ENCODE measurements at regions of chr3 and their contacts with region 1.

Region 1: DNA sequence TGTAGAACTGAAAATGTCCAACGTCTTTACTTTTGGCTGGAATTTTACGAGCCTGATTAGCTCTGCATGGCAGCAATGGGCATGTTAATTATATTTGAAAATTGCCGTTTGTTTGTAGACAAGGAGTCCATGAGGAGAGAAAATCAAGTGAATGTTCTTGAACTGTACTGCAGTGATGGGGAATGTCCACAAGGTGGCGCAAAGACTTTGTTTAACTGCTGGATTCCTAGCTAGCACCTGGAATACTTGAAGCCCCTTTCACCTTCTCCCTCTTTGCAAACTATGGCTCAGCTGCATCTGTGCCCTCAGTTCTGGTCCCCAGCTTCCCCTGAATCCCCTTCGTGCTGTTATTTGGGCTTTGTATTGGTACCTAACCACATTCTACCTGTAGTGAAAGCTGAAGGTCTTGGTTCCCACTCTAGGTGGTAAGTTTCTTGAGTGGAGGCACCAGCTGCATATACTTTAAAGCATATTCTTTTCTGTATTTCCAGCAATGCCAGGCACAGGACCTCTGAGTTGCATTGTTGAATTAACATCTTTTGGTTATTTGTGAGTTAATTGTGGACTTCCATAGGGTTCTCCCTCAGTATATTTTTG is 25.3 kb downstream of the EXOG start:
- DNase-seq: peak; percentile 72
- H3K4me3 Mint-ChIP-seq: no peak overlapping the region
- H3K27ac Mint-ChIP-seq: no peak overlapping the region
- H3K4me1 Mint-ChIP-seq: peaks cover 30% of the 10 kb centered on the region
- H3K27me3 Mint-ChIP-seq: no peaks in the 10 kb centered on the region

Region 2: GRCh38 chr3:38397320-38397719 is 124.2 kb before region 1 on chr3:
- CTCF ChIA-PET with region 1: no interaction called
- POLR2A ChIA-PET with region 1: no interaction called
- intact Hi-C with region 1: no loop called
- DNase-seq: peak; percentile 18
- H3K4me3 Mint-ChIP-seq: no peak overlapping the region
- H3K27ac Mint-ChIP-seq: no peak overlapping the region
- H3K4me1 Mint-ChIP-seq: no peaks in the 10 kb centered on the region
- H3K27me3 Mint-ChIP-seq: no peaks in the 10 kb centered on the region

Region 3: DNA sequence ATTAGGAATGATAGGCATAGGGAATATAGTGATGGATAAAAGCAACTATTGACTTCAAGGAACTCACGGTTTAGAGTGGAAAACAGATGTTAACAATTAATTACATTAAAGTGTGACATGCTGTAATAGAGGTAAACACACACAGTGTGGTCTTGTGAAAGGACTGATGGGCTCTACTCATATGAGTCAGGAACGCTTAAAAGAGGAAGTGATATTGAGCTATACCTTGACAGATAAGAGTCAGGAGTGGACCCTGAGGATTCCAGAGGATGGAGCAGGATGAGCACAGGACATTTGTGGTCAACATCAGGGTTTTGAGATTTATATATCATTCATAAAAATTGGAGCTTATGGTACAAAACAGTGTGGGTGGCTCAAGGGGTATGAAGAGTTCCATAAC is 14.4 kb before region 1 on chr3:
- CTCF ChIA-PET with region 1: interaction called, 16 read pairs
- POLR2A ChIA-PET with region 1: interaction called, 3 read pairs
- intact Hi-C with region 1: no loop called
- DNase-seq: no peak
- H3K4me3 Mint-ChIP-seq: no peak overlapping the region
- H3K27ac Mint-ChIP-seq: no peak overlapping the region
- H3K4me1 Mint-ChIP-seq: no peaks in the 10 kb centered on the region
- H3K27me3 Mint-ChIP-seq: no peaks in the 10 kb centered on the region

Region 4: GRCh38 chr3:38538773-38539353 is 17.4 kb after region 1 on chr3:
- CTCF ChIA-PET with region 1: interaction called, 12 read pairs
- POLR2A ChIA-PET with region 1: no interaction called
- intact Hi-C with region 1: no loop called
- DNase-seq: no peak
- H3K4me3 Mint-ChIP-seq: no peak overlapping the region
- H3K27ac Mint-ChIP-seq: no peak overlapping the region
- H3K4me1 Mint-ChIP-seq: peaks cover 3% of the 10 kb centered on the region
- H3K27me3 Mint-ChIP-seq: no peaks in the 10 kb centered on the region

Region 5: DNA sequence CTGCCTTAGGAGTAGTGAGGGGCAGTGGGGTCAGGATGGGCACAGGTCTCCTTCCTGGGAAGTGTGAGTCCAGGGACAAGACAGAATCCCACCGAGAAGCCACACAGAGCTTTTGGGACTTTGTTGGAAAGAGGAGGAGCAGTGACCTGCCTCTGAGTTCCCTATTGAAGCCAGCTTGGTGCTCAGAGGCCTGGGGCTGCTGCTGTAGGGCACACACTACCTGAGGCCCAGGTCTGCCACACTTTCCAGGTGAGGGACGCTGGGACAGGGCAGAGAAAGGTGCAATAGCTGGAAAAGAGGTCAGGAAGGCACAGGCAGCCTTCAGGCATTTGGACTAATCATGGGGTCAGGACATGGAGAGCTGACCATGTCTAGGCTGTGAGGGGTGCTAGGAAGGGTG is 60.3 kb after region 1 on chr3:
- CTCF ChIA-PET with region 1: no interaction called
- POLR2A ChIA-PET with region 1: no interaction called
- intact Hi-C with region 1: no loop called
- DNase-seq: no peak
- H3K4me3 Mint-ChIP-seq: no peak overlapping the region
- H3K27ac Mint-ChIP-seq: no peak overlapping the region
- H3K4me1 Mint-ChIP-seq: no peaks in the 10 kb centered on the region
- H3K27me3 Mint-ChIP-seq: no peaks in the 10 kb centered on the region

Region 6: DNA sequence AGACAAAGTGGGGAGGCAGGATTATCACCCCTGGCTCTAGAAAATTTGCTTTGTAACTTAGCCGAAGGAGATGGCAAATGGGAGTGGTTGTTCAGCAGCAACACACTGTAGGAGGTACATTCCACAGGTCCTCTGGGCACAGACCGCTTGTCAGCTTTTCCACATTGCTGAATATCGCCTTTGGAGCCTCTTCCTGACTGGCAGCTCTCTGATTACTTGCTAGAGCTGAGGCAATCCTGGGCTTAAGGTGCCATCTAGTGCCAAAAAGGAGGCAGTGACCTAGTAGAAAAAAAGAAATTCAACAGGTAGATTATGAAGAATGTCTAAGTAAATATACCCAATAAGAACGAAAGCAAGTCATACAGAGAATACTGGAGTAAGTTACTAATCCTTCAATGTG is 141.1 kb after region 1 on chr3:
- CTCF ChIA-PET with region 1: interaction called, 77 read pairs
- POLR2A ChIA-PET with region 1: no interaction called
- intact Hi-C with region 1: no loop called
- DNase-seq: no peak
- H3K4me3 Mint-ChIP-seq: no peak overlapping the region
- H3K27ac Mint-ChIP-seq: no peak overlapping the region
- H3K4me1 Mint-ChIP-seq: no peaks in the 10 kb centered on the region
- H3K27me3 Mint-ChIP-seq: peaks cover 33% of the 10 kb centered on the region

Region 7: GRCh38 chr3:39000008-39000450 is 478.5 kb after region 1 on chr3:
- CTCF ChIA-PET with region 1: interaction called, 29 read pairs
- POLR2A ChIA-PET with region 1: no interaction called
- intact Hi-C with region 1: loop called (anchors 1 kb)
- DNase-seq: no peak
- H3K4me3 Mint-ChIP-seq: no peak overlapping the region
- H3K27ac Mint-ChIP-seq: no peak overlapping the region
- H3K4me1 Mint-ChIP-seq: no peaks in the 10 kb centered on the region
- H3K27me3 Mint-ChIP-seq: peaks cover 2% of the 10 kb centered on the region